ENCODE measurements at regions of chr10 and their contacts with region 1.

Region 1: GRCh38 chr10:75099952-75100763 is 11.3 kb upstream of the SAMD8 start:
- DNase-seq: peak; percentile 60 to 89 (median 77)
- ATAC-seq: peak; percentile 99
- H3K4me3 ChIP-seq: no peak overlapping the region
- H3K4me3 Mint-ChIP-seq: no peak overlapping the region
- H3K27ac ChIP-seq: no peak overlapping the region
- H3K27ac Mint-ChIP-seq: no peak overlapping the region
- H3K4me1 ChIP-seq: peaks cover 8% of the 10 kb centered on the region
- H3K4me1 Mint-ChIP-seq: peaks cover 5% of the 10 kb centered on the region
- H3K27me3 ChIP-seq: no peaks in the 10 kb centered on the region
- H3K27me3 Mint-ChIP-seq: no peaks in the 10 kb centered on the region
- CTCF ChIP-seq: peak; percentile 93

Region 2: DNA sequence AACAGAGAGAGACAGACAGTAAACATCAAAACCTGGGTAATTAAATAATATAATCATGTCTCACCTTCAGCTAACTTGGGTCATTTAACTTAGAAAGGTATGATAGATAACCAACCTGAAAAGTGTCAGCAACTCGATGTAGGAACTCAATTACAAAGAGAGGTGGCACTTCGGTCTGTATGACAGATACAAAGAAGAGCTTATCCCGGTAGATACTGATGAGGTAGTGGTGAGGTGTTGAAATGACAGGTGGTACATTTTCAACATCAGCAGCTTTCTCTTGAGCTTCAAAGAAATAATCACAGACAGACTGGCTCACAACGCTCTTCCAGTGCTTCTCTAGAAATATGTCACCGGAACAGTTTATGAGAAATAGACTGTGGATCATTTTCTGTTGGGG is 962.2 kb before region 1 on chr10:
- CTCF ChIA-PET with region 1: no interaction called
- POLR2A ChIA-PET with region 1: no interaction called
- intact Hi-C with region 1: loop called in 1 of 2 experiments (anchors 10 kb)
- DNase-seq: no peak
- ATAC-seq: peak; percentile 64
- H3K4me3 ChIP-seq: no peak overlapping the region
- H3K4me3 Mint-ChIP-seq: no peak overlapping the region
- H3K27ac ChIP-seq: no peak overlapping the region
- H3K27ac Mint-ChIP-seq: no peak overlapping the region
- H3K4me1 ChIP-seq: no peaks in the 10 kb centered on the region
- H3K4me1 Mint-ChIP-seq: peaks cover 12% of the 10 kb centered on the region
- H3K27me3 ChIP-seq: no peaks in the 10 kb centered on the region
- H3K27me3 Mint-ChIP-seq: no peaks in the 10 kb centered on the region
- CTCF ChIP-seq: no peak

Region 3: GRCh38 chr10:74244097-74244685 is 856.0 kb before region 1 on chr10:
- CTCF ChIA-PET with region 1: interaction called, 5 read pairs
- POLR2A ChIA-PET with region 1: no interaction called
- intact Hi-C with region 1: loop called (anchors 1 kb)
- DNase-seq: peak in 4 of 14 experiments; percentile 49 to 70 (median 60)
- ATAC-seq: no peak
- H3K4me3 ChIP-seq: no peak overlapping the region
- H3K4me3 Mint-ChIP-seq: no peak overlapping the region
- H3K27ac ChIP-seq: no peak overlapping the region
- H3K27ac Mint-ChIP-seq: no peak overlapping the region
- H3K4me1 ChIP-seq: no peaks in the 10 kb centered on the region
- H3K4me1 Mint-ChIP-seq: no peaks in the 10 kb centered on the region
- H3K27me3 ChIP-seq: no peaks in the 10 kb centered on the region
- H3K27me3 Mint-ChIP-seq: no peaks in the 10 kb centered on the region
- CTCF ChIP-seq: peak; percentile 87

Region 4: GRCh38 chr10:74262856-74263255 is 837.3 kb before region 1 on chr10:
- CTCF ChIA-PET with region 1: interaction called, 4 read pairs
- POLR2A ChIA-PET with region 1: no interaction called
- intact Hi-C with region 1: loop called (anchors 1 kb)
- DNase-seq: no peak
- ATAC-seq: no peak
- H3K4me3 ChIP-seq: no peak overlapping the region
- H3K4me3 Mint-ChIP-seq: no peak overlapping the region
- H3K27ac ChIP-seq: no peak overlapping the region
- H3K27ac Mint-ChIP-seq: no peak overlapping the region
- H3K4me1 ChIP-seq: peaks cover 4% of the 10 kb centered on the region
- H3K4me1 Mint-ChIP-seq: peaks cover 6% of the 10 kb centered on the region
- H3K27me3 ChIP-seq: no peaks in the 10 kb centered on the region
- H3K27me3 Mint-ChIP-seq: no peaks in the 10 kb centered on the region
- CTCF ChIP-seq: no peak

Region 5: DNA sequence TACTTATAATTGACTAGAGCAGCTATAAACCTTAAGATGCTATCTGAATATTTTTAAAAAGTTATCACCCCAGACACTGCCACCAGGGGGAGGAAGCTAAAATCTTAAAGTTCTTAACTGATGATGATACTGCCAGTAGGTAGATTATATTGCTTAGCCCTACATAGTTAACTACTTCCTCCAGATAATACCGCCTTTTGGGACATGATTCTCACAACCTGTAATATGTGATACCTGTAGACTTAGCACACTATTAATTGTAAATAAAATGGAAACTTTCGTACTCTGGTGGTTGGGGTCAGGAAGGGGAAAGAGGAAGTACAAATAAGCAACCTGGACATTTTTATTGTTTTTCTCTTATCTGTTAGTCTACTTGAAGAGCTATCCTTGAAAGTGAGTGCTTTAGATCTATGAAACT is 680.2 kb before region 1 on chr10:
- CTCF ChIA-PET with region 1: interaction called, 3 read pairs
- POLR2A ChIA-PET with region 1: no interaction called
- intact Hi-C with region 1: loop called in 1 of 2 experiments (anchors 2 kb)
- DNase-seq: peak in 10 of 14 experiments; percentile 5 to 63 (median 25)
- ATAC-seq: peak; percentile 60
- H3K4me3 ChIP-seq: no peak overlapping the region
- H3K4me3 Mint-ChIP-seq: no peak overlapping the region
- H3K27ac ChIP-seq: no peak overlapping the region
- H3K27ac Mint-ChIP-seq: no peak overlapping the region
- H3K4me1 ChIP-seq: no peaks in the 10 kb centered on the region
- H3K4me1 Mint-ChIP-seq: peaks cover 7% of the 10 kb centered on the region
- H3K27me3 ChIP-seq: no peaks in the 10 kb centered on the region
- H3K27me3 Mint-ChIP-seq: no peaks in the 10 kb centered on the region
- CTCF ChIP-seq: peak; percentile 74

Region 6: GRCh38 chr10:74738985-74739567 is 361.1 kb before region 1 on chr10:
- CTCF ChIA-PET with region 1: no interaction called
- POLR2A ChIA-PET with region 1: no interaction called
- intact Hi-C with region 1: loop called in 1 of 2 experiments (anchors 10 kb)
- DNase-seq: peak in 5 of 14 experiments; percentile 4 to 63 (median 55)
- ATAC-seq: peak; percentile 74
- H3K4me3 ChIP-seq: no peak overlapping the region
- H3K4me3 Mint-ChIP-seq: no peak overlapping the region
- H3K27ac ChIP-seq: no peak overlapping the region
- H3K27ac Mint-ChIP-seq: peak overlapping the region; percentile 73
- H3K4me1 ChIP-seq: peaks cover 17% of the 10 kb centered on the region
- H3K4me1 Mint-ChIP-seq: peaks cover 24% of the 10 kb centered on the region
- H3K27me3 ChIP-seq: no peaks in the 10 kb centered on the region
- H3K27me3 Mint-ChIP-seq: no peaks in the 10 kb centered on the region
- CTCF ChIP-seq: no peak

Region 7: DNA sequence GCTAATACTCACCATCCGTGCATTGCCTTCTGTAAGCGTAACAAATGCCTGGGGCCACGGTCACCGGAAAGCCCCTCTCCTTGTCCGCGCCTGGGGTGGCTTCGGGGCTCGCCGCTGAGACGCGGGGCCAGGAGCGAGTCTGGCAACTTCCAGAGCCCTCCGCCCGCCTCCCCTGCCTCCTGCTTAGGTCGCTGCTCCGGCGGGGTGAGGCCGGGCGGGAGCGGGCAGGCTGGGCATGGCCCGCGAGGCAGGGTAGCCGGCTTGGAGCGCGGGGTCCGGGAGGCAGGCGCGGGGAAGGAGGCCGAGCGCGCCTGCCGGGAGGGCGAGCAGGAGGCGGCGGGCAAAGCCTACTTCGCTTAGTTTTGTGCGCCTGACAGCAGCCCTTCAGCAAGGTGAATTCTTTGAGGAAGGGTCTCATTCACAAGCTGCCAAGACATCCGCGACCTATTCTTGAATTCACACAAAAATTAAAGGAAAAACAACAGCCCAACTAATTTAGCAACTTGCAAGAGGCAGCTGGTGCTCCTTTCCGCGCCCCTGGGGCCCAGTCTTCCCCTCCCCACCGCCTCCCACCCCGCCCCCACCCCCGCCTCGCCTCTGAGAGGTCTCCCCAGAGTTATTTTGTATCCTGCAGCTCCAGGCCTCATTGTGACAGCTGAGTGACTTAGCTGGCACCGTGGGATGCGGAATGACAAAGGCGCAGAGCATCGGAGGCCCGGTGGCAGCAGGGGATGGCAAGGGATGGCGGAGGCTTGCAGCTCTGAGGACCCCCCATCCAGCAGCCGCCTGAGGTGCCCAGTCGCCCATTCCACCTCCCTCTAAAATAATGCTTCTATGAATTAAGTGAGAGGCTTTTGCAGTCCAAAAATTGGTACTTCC is 286.5 kb before region 1 on chr10:
- CTCF ChIA-PET with region 1: no interaction called
- POLR2A ChIA-PET with region 1: no interaction called
- intact Hi-C with region 1: no loop called
- DNase-seq: no peak
- ATAC-seq: no peak
- H3K4me3 ChIP-seq: no peak overlapping the region
- H3K4me3 Mint-ChIP-seq: no peak overlapping the region
- H3K27ac ChIP-seq: no peak overlapping the region
- H3K27ac Mint-ChIP-seq: no peak overlapping the region
- H3K4me1 ChIP-seq: no peaks in the 10 kb centered on the region
- H3K4me1 Mint-ChIP-seq: no peaks in the 10 kb centered on the region
- H3K27me3 ChIP-seq: no peaks in the 10 kb centered on the region
- H3K27me3 Mint-ChIP-seq: no peaks in the 10 kb centered on the region
- CTCF ChIP-seq: no peak

Region 8: GRCh38 chr10:75079436-75080083 is 20.6 kb before region 1 on chr10:
- CTCF ChIA-PET with region 1: no interaction called
- POLR2A ChIA-PET with region 1: no interaction called
- intact Hi-C with region 1: no loop called
- DNase-seq: no peak
- ATAC-seq: no peak
- H3K4me3 ChIP-seq: no peak overlapping the region
- H3K4me3 Mint-ChIP-seq: no peak overlapping the region
- H3K27ac ChIP-seq: no peak overlapping the region
- H3K27ac Mint-ChIP-seq: no peak overlapping the region
- H3K4me1 ChIP-seq: no peaks in the 10 kb centered on the region
- H3K4me1 Mint-ChIP-seq: no peaks in the 10 kb centered on the region
- H3K27me3 ChIP-seq: no peaks in the 10 kb centered on the region
- H3K27me3 Mint-ChIP-seq: no peaks in the 10 kb centered on the region
- CTCF ChIP-seq: no peak

Region 9: DNA sequence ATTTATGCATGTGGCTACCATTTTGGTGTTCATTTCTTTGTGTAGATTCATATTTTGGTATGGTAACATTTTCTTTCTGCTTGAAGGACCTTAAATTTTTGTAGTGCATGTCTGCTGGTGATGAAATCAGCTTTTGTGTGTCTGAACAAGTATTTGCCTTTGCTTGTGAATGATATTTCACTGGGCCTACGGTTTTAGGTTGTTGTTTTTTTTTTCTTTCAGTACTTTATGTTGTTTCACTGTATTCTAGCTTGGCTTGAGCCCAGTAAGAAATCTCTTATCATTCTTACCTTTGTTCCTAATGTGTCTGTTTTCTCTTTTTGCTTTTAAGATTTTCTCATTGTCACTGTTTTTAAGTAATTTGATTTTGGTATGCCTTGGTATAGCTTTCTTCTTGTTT is 43.2 kb after region 1 on chr10:
- CTCF ChIA-PET with region 1: no interaction called
- POLR2A ChIA-PET with region 1: no interaction called
- intact Hi-C with region 1: no loop called
- DNase-seq: no peak
- ATAC-seq: no peak
- H3K4me3 ChIP-seq: no peak overlapping the region
- H3K4me3 Mint-ChIP-seq: no peak overlapping the region
- H3K27ac ChIP-seq: no peak overlapping the region
- H3K27ac Mint-ChIP-seq: peak overlapping the region; percentile 60
- H3K4me1 ChIP-seq: peaks cover 18% of the 10 kb centered on the region
- H3K4me1 Mint-ChIP-seq: peaks cover 66% of the 10 kb centered on the region
- H3K27me3 ChIP-seq: no peaks in the 10 kb centered on the region
- H3K27me3 Mint-ChIP-seq: no peaks in the 10 kb centered on the region
- CTCF ChIP-seq: no peak

Region 10: GRCh38 chr10:75379212-75379724 is 279.1 kb after region 1 on chr10:
- CTCF ChIA-PET with region 1: no interaction called
- POLR2A ChIA-PET with region 1: no interaction called
- intact Hi-C with region 1: no loop called
- DNase-seq: no peak
- ATAC-seq: no peak
- H3K4me3 ChIP-seq: no peak overlapping the region
- H3K4me3 Mint-ChIP-seq: no peak overlapping the region
- H3K27ac ChIP-seq: no peak overlapping the region
- H3K27ac Mint-ChIP-seq: no peak overlapping the region
- H3K4me1 ChIP-seq: no peaks in the 10 kb centered on the region
- H3K4me1 Mint-ChIP-seq: no peaks in the 10 kb centered on the region
- H3K27me3 ChIP-seq: peaks cover 0 to 2% of the 10 kb centered on the region in 2 experiments
- H3K27me3 Mint-ChIP-seq: peaks cover 14% of the 10 kb centered on the region
- CTCF ChIP-seq: no peak

Measured in CD4-positive, alpha-beta T cell (primary cell).